ENCODE measurements at regions of chr14 and their contacts with region 1.

Region 1: DNA sequence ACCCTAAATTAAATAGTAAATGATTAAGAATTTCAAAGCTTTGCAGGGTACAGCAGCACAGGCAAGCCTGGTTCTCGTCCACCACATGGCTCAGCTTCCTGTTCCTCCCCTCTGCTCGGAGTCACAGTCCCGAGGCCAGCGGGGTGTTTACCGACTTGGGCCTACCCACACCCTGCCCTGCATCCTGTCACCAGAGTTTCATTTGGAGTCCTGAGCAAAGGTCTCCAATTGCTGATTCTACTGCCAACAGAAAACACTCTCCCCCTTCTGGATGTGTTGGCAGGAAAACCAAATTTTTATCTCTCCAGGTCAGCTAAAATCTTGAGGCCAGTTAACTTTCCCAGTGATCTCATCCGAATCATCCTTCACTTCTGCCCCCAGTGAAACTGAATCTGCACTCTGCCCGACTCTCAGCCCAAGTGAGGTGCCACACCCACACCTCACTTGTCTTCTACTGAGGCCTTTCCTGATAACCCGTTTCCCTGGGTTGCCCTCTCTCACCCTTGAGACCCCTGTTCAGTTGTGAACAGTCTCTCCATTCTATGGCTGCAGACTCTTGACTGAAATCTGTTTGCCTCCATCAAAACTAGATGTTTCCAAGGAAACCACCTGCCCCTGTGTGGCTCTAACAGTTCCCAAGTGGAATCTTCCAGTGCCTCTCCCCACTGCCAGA is 71.2 kb downstream of the VCPKMT start:
- DNase-seq: peak; percentile 54
- ATAC-seq: peak; percentile 90
- H3K4me3 ChIP-seq: no peak overlapping the region
- H3K27ac ChIP-seq: peak overlapping the region; percentile 50
- H3K4me1 ChIP-seq: peaks cover 42% of the 10 kb centered on the region
- H3K27me3 ChIP-seq: no peaks in the 10 kb centered on the region
- CTCF ChIP-seq: no peak
- EP300 ChIP-seq: no peak
- POLR2A ChIP-seq: peak; percentile 55; the same call in 1 of the 2 replicates
- RAD21 ChIP-seq: peak; percentile 9; the same call in 1 of the 2 replicates

Region 2: DNA sequence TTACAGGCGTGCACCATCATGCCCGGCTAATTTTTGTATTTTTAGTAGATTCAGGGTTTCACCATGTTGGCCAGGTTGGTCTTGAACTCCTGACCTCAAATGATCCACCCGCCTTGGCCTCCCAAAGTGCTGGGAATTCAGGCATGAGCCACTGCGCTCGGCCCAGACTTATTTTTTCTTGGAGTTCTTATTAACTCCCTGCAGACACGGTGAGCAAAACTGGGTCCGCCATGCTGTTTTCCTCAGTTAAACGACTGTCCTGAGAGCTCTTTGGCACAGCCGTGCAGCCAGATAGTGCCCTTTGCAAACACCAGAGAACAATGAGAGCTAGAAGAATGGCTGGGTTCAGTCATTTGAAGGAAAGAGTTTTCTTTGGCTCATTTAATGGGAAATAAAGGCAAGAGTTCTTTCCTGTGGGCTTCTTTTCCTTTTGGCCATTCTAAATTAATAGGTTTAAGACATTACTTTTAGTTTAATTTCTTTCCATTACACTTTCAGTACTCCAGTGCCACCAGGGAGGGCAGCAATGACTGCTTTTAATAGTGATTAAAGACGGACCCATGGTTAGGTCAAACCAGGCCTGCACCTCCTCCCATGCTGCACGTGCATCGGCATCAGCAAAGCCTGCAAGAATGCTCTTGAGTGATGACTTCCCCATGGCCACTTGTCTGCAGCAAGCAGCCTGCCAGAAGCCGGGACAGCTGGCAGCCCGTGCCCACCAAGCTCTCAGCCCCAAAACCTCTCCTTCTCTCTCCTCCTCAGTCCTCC is 10.5 kb after region 1 on chr14:
- CTCF ChIA-PET with region 1: interaction called, 14 read pairs
- POLR2A ChIA-PET with region 1: interaction called, 62 read pairs
- RAD21 ChIA-PET with region 1: interaction called, 110 read pairs
- SMC1A ChIA-PET with region 1: interaction called, 96 read pairs
- in situ Hi-C with region 1: no loop called
- intact Hi-C with region 1: no loop called
- DNase-seq: no peak
- ATAC-seq: peak; percentile 60
- H3K4me3 ChIP-seq: no peak overlapping the region
- H3K27ac ChIP-seq: no peak overlapping the region
- H3K4me1 ChIP-seq: peaks cover 6% of the 10 kb centered on the region
- H3K27me3 ChIP-seq: no peaks in the 10 kb centered on the region
- CTCF ChIP-seq: peak in 2 of 3 experiments; percentile 2 to 29; a peak in 2 of 6 replicates
- EP300 ChIP-seq: no peak
- POLR2A ChIP-seq: no peak
- RAD21 ChIP-seq: peak; percentile 41